Posterior vena cava (tissue), 2 donors: ENCODE measurements at regions of chr2 and their contacts with region 1.

Region 1: GRCh38 chr2:1115843-1116539 is 165.3 kb downstream of the SNTG2 start:
- DNase-seq: no peak

Region 2: DNA sequence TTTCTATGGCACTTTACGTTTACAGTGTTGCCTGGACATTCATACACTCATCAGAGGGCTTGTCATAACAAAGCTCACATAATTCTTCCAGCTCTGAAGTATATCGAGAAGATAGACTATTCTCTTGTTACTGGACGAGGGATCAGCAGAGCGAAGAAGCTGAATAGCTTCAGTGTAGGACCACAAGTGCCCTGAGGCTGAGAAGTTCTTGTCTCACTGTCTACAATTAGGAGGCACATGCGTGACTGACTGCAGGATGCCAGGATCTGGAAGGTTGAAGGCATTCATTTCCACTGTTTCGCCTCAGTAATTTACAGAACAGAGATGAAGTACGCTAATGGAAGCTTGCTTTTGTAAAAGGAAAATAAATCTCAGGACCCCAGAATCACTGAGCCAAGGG is 861.8 kb before region 1 on chr2:
- intact Hi-C with region 1: no loop called
- DNase-seq: no peak

Region 3: GRCh38 chr2:1047485-1047884 is 68.5 kb before region 1 on chr2:
- intact Hi-C with region 1: no loop called
- DNase-seq: no peak

Region 4: DNA sequence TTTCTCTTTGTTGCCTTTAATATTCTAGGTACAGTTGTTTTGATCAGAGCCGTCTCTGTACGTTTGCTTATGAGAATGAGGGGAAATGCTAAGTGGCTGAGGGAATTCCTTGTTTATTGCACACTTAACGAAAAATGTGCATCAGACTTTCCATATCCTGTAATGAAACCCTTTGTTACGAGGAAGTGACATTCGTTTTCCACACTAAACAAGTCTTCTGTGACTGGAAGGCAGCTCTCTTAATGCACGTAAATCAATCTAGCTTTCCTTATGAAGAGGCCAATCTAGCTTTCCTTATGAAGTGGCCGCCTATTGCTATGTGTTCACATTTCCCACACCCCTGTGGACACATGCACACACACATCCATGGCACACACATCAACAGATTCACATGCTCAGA is 20.9 kb after region 1 on chr2:
- intact Hi-C with region 1: loop called in 1 of 2 experiments (anchors 1 kb)
- DNase-seq: no peak